ENCODE measurements at regions of chr12 and their contacts with region 1.

Region 1: GRCh38 chr12:20376984-20377383 is 8.6 kb downstream of the PDE3A start:
- DNase-seq: peak in 1 of 2 experiments; percentile 22
- H3K4me3 ChIP-seq: no peak overlapping the region
- H3K4me3 Mint-ChIP-seq: no peak overlapping the region
- H3K27ac Mint-ChIP-seq: no peak overlapping the region
- H3K4me1 ChIP-seq: peaks cover 4% of the 10 kb centered on the region; the same call in 1 of the 2 replicates
- H3K4me1 Mint-ChIP-seq: no peaks in the 10 kb centered on the region
- H3K27me3 ChIP-seq: no peaks in the 10 kb centered on the region
- H3K27me3 Mint-ChIP-seq: peaks cover 11% of the 10 kb centered on the region
- CTCF ChIP-seq: peak; percentile 14 to 54

Region 2: GRCh38 chr12:19572920-19573558 is 803.9 kb before region 1 on chr12:
- CTCF ChIA-PET with region 1: no interaction called
- POLR2A ChIA-PET with region 1: no interaction called
- intact Hi-C with region 1: loop called (anchors 2 kb)
- DNase-seq: peak; percentile 55 to 62
- H3K4me3 ChIP-seq: no peak overlapping the region
- H3K4me3 Mint-ChIP-seq: no peak overlapping the region
- H3K27ac Mint-ChIP-seq: no peak overlapping the region
- H3K4me1 ChIP-seq: 0 out of 2 replicates have a peak, but pooled peaks cover 6% of the 10 kb centered on the region
- H3K4me1 Mint-ChIP-seq: peaks cover 7% of the 10 kb centered on the region
- H3K27me3 ChIP-seq: no peaks in the 10 kb centered on the region
- H3K27me3 Mint-ChIP-seq: no peaks in the 10 kb centered on the region
- CTCF ChIP-seq: peak; percentile 56 to 76

Region 3: GRCh38 chr12:19757317-19757877 is 619.6 kb before region 1 on chr12:
- CTCF ChIA-PET with region 1: no interaction called
- POLR2A ChIA-PET with region 1: no interaction called
- intact Hi-C with region 1: loop called (anchors 1 kb)
- DNase-seq: peak in 1 of 2 experiments; percentile 23
- H3K4me3 ChIP-seq: no peak overlapping the region
- H3K4me3 Mint-ChIP-seq: no peak overlapping the region
- H3K27ac Mint-ChIP-seq: no peak overlapping the region
- H3K4me1 ChIP-seq: no peaks in the 10 kb centered on the region
- H3K4me1 Mint-ChIP-seq: no peaks in the 10 kb centered on the region
- H3K27me3 ChIP-seq: no peaks in the 10 kb centered on the region
- H3K27me3 Mint-ChIP-seq: no peaks in the 10 kb centered on the region
- CTCF ChIP-seq: peak; percentile 78 to 80